ENCODE measurements at regions of chr6 and their contacts with region 1.

Region 1: GRCh38 chr6:14674458-14674857 is 556.9 kb downstream of the CD83 start:
- DNase-seq: no peak
- H3K4me3 ChIP-seq: no peak overlapping the region
- H3K27ac ChIP-seq: no peak overlapping the region
- H3K4me1 ChIP-seq: no peaks in the 10 kb centered on the region
- H3K27me3 ChIP-seq: no peaks in the 10 kb centered on the region
- CTCF ChIP-seq: no peak
- POLR2A ChIP-seq: no peak

Region 2: GRCh38 chr6:14655201-14656061 is 19.0 kb before region 1 on chr6:
- intact Hi-C with region 1: loop called (anchors 2 kb)
- DNase-seq: no peak
- H3K4me3 ChIP-seq: no peak overlapping the region
- H3K27ac ChIP-seq: no peak overlapping the region
- H3K4me1 ChIP-seq: no peaks in the 10 kb centered on the region
- H3K27me3 ChIP-seq: no peaks in the 10 kb centered on the region
- CTCF ChIP-seq: no peak
- POLR2A ChIP-seq: no peak